ENCODE measurements at regions of chrX and their contacts with region 1.

Region 1: DNA sequence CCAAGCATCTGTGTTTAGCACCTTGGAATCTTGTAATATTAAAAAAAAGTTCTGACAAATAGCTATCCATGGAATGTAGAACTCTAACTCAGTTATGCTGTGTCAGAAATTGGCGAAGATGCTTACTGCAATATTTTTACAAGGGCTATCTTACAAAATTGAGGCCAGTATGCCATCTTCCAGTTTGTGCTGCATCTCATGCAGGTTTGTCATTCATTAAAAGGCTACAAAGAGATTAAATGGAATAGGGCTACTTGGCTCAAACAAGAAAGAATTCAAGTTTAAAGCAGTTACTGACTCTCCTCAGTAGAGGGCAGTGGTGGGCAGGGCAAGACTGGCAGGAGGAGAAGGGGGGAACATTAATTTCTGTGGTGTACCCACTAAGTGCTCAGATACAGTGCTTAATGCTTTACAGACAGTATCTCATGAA is 66.5 kb downstream of the SHROOM4 start:
- DNase-seq: no peak

Region 2: GRCh38 chrX:50905334-50905733 is 157.8 kb after region 1 on chrX:
- intact Hi-C with region 1: loop called (anchors 5 kb)
- DNase-seq: no peak

Region 3: GRCh38 chrX:50988649-50989048 is 241.2 kb after region 1 on chrX:
- intact Hi-C with region 1: loop called (anchors 2 kb)
- DNase-seq: no peak